Caco-2 (cell line): ENCODE measurements at regions of chr6 and their contacts with region 1.

Region 1: GRCh38 chr6:48087448-48087847 is 23.5 kb downstream of the PTCHD4 start:
- DNase-seq: no peak
- H3K4me3 ChIP-seq: no peak overlapping the region
- H3K4me3 Mint-ChIP-seq: no peak overlapping the region
- H3K27ac Mint-ChIP-seq: no peak overlapping the region
- H3K4me1 ChIP-seq: no peaks in the 10 kb centered on the region
- H3K4me1 Mint-ChIP-seq: no peaks in the 10 kb centered on the region
- H3K27me3 ChIP-seq: no peaks in the 10 kb centered on the region
- H3K27me3 Mint-ChIP-seq: peaks cover 2% of the 10 kb centered on the region
- CTCF ChIP-seq: no peak

Region 2: DNA sequence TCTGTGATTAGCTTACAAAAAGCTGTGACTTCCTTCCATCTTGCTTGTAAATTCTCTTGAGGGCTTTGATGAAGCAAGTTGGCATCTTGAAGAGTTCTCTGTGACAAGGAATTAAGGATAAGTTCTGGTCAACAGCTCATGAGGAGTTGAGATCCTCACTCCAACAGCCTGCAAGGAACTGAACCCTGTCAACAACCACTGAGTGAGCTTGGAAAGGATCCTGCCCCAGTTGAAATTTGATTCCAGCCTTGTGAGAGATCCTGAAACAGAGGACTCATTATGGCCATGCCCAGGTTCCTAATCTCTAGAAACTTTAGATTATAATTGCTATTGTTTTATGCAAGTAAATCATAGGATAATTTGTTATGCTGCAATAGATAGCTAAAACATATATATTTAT is 110.1 kb before region 1 on chr6:
- CTCF ChIA-PET with region 1: no interaction called
- POLR2A ChIA-PET with region 1: no interaction called
- intact Hi-C with region 1: no loop called
- DNase-seq: no peak
- H3K4me3 ChIP-seq: no peak overlapping the region
- H3K4me3 Mint-ChIP-seq: no peak overlapping the region
- H3K27ac Mint-ChIP-seq: no peak overlapping the region
- H3K4me1 ChIP-seq: no peaks in the 10 kb centered on the region
- H3K4me1 Mint-ChIP-seq: no peaks in the 10 kb centered on the region
- H3K27me3 ChIP-seq: no peaks in the 10 kb centered on the region
- H3K27me3 Mint-ChIP-seq: peaks cover 9% of the 10 kb centered on the region
- CTCF ChIP-seq: no peak

Region 3: DNA sequence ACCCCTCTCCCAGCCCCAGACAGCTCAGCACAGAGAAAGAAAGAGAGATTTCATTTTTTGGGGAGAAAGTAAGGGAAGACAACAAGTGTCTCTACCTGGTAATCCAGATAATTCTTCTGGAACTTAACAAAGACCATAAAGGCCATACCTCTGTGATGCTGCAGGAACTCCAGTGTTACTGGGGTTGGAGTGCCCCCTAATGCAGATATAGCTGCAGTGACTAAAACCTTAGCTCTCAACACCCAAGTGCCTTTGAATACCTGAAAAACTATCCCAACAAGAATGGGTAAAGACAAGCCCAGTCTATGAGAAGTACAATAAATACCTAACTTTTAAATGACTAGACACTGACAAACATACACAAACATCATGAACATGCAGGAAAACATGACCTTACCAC is 388.8 kb after region 1 on chr6:
- CTCF ChIA-PET with region 1: interaction called, 6 read pairs
- POLR2A ChIA-PET with region 1: no interaction called
- intact Hi-C with region 1: loop called (anchors 5 kb)
- DNase-seq: peak in 1 of 2 experiments; percentile 7
- H3K4me3 ChIP-seq: no peak overlapping the region
- H3K4me3 Mint-ChIP-seq: no peak overlapping the region
- H3K27ac Mint-ChIP-seq: no peak overlapping the region
- H3K4me1 ChIP-seq: no peaks in the 10 kb centered on the region
- H3K4me1 Mint-ChIP-seq: no peaks in the 10 kb centered on the region
- H3K27me3 ChIP-seq: no peaks in the 10 kb centered on the region
- H3K27me3 Mint-ChIP-seq: peaks cover 5% of the 10 kb centered on the region
- CTCF ChIP-seq: peak in 1 of 2 experiments; percentile 34

Region 4: DNA sequence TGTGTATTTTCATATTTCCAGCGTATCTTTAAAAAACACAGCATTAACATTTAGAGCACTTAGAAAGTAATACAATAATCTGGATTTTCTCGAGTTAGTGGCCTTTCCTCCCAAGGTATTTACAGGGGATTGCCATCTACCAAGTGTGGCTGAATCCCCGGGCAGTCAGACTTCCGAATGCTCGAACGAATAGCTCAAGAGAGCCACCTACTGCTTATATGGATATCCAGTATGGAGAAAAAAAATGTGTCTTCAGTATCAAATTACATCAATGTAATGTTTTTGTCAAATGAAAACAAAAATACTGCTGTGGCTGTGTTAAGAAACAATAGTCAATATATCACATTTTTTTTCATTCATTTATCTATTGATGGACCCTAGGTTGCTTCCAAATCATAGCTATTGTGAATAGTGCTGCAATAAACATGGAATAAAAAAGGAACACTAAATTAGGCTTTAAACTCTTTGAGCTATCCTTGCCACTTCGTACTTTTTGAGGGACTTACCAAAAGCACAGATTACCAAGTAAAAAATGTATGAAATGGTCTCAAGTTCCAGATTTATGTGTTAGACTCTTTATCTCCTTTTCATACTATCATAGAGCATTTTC is 678.0 kb after region 1 on chr6:
- CTCF ChIA-PET with region 1: no interaction called
- POLR2A ChIA-PET with region 1: no interaction called
- intact Hi-C with region 1: loop called (anchors 1 kb)
- DNase-seq: peak; percentile 39 to 42
- H3K4me3 ChIP-seq: no peak overlapping the region
- H3K4me3 Mint-ChIP-seq: no peak overlapping the region
- H3K27ac Mint-ChIP-seq: no peak overlapping the region
- H3K4me1 ChIP-seq: peaks cover 4% of the 10 kb centered on the region; the same call in 1 of the 2 replicates
- H3K4me1 Mint-ChIP-seq: no peaks in the 10 kb centered on the region
- H3K27me3 ChIP-seq: no peaks in the 10 kb centered on the region
- H3K27me3 Mint-ChIP-seq: no peaks in the 10 kb centered on the region
- CTCF ChIP-seq: peak; percentile 43 to 50

Region 5: DNA sequence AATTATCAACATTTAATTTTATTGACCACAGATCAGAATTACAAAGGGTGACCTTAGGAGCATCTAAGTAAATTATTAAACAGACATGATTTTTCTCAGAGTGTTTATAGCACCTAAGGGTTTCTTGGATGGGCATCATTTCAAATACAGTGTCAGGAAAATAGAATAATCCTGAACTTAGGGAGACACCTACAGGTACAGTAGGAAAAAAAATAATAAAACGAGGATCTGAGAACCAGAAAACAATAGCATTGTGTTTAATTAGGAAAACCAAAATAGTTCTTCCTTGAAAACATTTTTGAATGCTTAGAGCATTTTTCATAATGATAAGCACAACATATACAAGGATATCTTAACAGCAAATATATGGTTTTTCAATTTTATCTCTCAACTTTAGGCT is 1336.4 kb after region 1 on chr6:
- CTCF ChIA-PET with region 1: no interaction called
- POLR2A ChIA-PET with region 1: no interaction called
- intact Hi-C with region 1: loop called (anchors 2 kb)
- DNase-seq: no peak
- H3K4me3 ChIP-seq: no peak overlapping the region
- H3K4me3 Mint-ChIP-seq: no peak overlapping the region
- H3K27ac Mint-ChIP-seq: no peak overlapping the region
- H3K4me1 ChIP-seq: no peaks in the 10 kb centered on the region
- H3K4me1 Mint-ChIP-seq: no peaks in the 10 kb centered on the region
- H3K27me3 ChIP-seq: no peaks in the 10 kb centered on the region
- H3K27me3 Mint-ChIP-seq: no peaks in the 10 kb centered on the region
- CTCF ChIP-seq: peak in 1 of 2 experiments; percentile 6